CD14-positive monocyte (primary cell): ENCODE measurements at regions of chr20 and their contacts with region 1.

Region 1: GRCh38 chr20:47610247-47610944 is 108.7 kb downstream of the NCOA3 start:
- DNase-seq: peak; percentile 39 to 69 (median 69)
- H3K4me3 ChIP-seq: no peak overlapping the region
- H3K4me3 Mint-ChIP-seq: no peak overlapping the region
- H3K27ac ChIP-seq: peak overlapping the region; percentile 12 to 20
- H3K27ac Mint-ChIP-seq: peak overlapping the region in 4 of 7 donors; percentile 43 to 86 (median 53)
- H3K4me1 ChIP-seq: peaks cover 7 to 20% of the 10 kb centered on the region in 2 donors
- H3K4me1 Mint-ChIP-seq: peaks cover 24% of the 10 kb centered on the region
- H3K27me3 ChIP-seq: no peaks in the 10 kb centered on the region
- H3K27me3 Mint-ChIP-seq: peaks cover 0 to 1% (median 0%) of the 10 kb centered on the region in 3 donors
- CTCF ChIP-seq: no peak

Region 2: DNA sequence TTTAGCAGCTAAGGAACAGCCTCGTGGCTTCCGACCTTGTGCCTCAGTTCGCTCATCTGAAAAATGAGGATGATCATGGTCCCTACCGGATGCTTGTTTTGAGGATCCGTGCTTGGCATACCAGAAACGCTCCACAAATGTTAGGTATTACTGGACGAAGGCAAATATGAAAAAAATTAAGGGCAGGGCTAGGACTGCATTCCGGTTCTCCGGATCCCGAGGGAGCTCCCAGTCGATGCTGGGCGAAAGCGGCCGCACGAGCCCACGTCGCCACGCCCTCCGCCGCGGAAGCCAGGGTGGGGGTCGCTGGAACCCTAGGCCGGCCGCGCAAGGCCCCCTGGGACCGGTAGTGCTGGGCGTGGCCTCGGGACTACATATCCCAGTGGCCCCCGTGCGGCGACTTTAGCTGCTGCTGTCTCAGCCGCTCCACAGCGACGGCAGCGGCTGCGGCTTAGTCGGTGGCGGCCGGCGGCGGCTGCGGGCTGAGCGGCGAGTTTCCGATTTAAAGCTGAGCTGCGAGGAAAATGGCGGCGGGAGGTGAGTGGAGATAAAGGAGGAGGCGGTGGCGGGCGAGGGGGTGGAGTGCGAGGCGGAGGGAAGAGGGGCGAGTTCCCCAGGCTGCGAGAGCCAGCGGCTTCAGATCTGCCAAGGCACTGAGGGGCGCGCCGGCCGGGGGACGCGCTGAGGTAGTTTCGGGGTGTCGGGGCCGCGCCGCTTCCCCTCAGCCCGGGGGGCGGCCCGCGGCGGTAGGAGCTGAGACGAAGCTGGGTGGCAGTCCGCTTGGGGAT is 108.7 kb before region 1 on chr20 and contains the start of gene NCOA3:
- intact Hi-C with region 1: loop called in 1 of 2 experiments (anchors 5 kb)
- DNase-seq: peak; percentile 73 to 83 (median 80)
- H3K4me3 ChIP-seq: peak within 1 kb of the TSS; percentile 93 to 98 (median 98)
- H3K4me3 Mint-ChIP-seq: peak within 1 kb of the TSS; percentile 95 to 97
- H3K27ac ChIP-seq: peak within 1 kb of the TSS; percentile 95 to 96
- H3K27ac Mint-ChIP-seq: peak within 1 kb of the TSS; percentile 90 to 98 (median 95)
- H3K4me1 ChIP-seq: peaks cover 19 to 28% of the 10 kb centered on the region in 2 donors
- H3K4me1 Mint-ChIP-seq: peaks cover 35% of the 10 kb centered on the region
- H3K27me3 ChIP-seq: no peaks in the 10 kb centered on the region
- H3K27me3 Mint-ChIP-seq: peaks cover 0 to 2% (median 0%) of the 10 kb centered on the region in 3 donors
- CTCF ChIP-seq: peak; percentile 65
- polyA plus RNA-seq, gene NCOA3: 13.5 to 21.8 (median 21.3) TPM

Region 3: GRCh38 chr20:47725248-47725973 is 115.0 kb after region 1 on chr20:
- intact Hi-C with region 1: no loop called
- DNase-seq: peak; percentile 84 to 85 (median 85)
- H3K4me3 ChIP-seq: no peak overlapping the region
- H3K4me3 Mint-ChIP-seq: no peak overlapping the region
- H3K27ac ChIP-seq: no peak overlapping the region
- H3K27ac Mint-ChIP-seq: peak overlapping the region in 5 of 7 donors; percentile 32 to 100 (median 100)
- H3K4me1 ChIP-seq: peaks cover 51 to 59% of the 10 kb centered on the region in 2 donors
- H3K4me1 Mint-ChIP-seq: peaks cover 63% of the 10 kb centered on the region
- H3K27me3 ChIP-seq: no peaks in the 10 kb centered on the region
- H3K27me3 Mint-ChIP-seq: peaks cover 0 to 3% (median 0%) of the 10 kb centered on the region in 3 donors
- CTCF ChIP-seq: peak; percentile 92